ENCODE measurements at regions of chr3 and their contacts with region 1.

Region 1: DNA sequence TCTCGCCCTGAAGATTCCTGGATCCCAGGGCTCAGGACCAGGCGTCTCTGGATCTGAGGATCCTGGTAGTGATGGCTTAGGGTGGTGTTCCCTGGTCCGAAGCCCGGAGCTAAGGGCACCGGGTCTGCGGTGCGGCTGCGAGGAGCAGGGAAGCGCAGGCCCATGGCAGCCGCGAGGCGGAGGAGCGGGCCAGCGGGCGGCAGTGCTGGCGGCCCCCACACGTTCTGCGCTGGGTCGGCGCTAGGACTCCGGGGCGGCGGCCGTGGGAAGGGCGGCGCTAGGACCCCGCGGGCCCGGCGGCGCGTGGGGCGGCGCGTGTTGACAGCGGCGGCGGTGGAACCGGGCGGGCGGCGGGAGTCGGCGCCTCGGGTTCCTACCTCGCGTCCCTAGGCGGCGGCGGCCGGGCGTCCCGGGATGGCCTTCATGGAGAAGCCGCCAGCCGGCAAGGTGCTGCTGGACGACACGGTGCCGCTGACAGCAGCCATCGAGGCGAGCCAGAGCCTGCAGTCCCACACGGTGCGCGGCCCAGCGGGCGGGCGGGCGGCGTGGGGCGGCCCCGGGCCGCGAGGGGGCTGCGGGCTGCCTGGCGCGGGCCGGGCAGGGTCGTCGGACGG is at the start of gene PXK:
- DNase-seq: peak; percentile 70 to 78 (median 74)
- ATAC-seq: peak; percentile 86
- H3K4me3 ChIP-seq: peak within 1 kb of the TSS; percentile 72
- H3K27ac ChIP-seq: peak within 1 kb of the TSS; percentile 64
- H3K4me1 ChIP-seq: peaks cover 16 to 21% of the 10 kb centered on the region in 2 experiments; a peak in 4 of 5 replicates
- H3K27me3 ChIP-seq: no peaks in the 10 kb centered on the region
- CTCF ChIP-seq: peak in 2 of 3 experiments; percentile 2 to 43; a peak in 3 of 6 replicates
- EP300 ChIP-seq: no peak
- POLR2A ChIP-seq: no peak
- RAD21 ChIP-seq: peak; percentile 20 to 41
- polyA plus RNA-seq, gene PXK: 3.3 to 4.8 TPM

Region 2: DNA sequence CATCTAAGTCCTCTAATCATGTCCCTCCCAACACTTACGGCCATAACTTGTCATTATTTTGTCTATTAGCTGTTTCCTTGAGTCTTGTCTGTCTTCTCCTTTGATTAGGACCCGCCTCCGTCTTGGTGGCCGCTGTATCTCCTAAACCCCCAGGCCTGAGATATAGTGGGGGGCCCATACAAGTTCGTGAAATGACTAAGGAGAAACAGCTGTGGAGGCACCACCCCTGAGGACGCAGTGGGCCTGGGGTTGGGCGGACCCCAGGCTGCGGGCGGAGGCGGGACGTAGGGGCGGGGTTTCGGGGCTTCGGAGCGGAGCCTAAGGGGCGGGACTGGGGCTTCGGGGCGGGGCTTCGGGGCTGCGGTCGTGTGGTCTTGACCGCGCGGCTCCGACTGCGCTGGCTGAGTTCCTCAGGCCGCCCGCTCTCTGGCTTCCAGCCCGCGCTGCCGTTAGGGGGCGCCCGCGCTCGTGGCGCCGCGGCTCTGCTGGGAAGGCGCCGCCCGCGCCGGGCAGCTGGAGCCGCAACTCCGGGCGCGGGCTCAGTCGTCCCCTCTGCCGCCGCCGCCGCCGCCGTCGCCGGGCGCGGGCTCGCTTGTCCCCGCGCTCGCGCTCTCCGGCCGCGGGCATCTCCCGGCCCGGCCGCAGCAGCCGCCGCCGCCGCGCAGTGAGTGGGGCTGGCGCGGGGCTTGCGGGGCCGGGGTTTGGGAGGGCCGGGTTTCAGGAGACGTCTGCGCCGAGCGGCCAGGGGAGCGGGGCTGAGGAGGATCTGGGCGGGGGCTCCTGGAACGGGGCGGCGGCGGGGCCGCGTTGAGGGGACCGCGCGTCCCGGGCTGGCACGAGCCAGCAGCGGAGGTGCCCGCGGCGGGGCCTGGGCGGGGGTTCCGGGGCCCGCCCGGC is 159.1 kb after region 1 on chr3 and contains the start of gene KCTD6:
- CTCF ChIA-PET with region 1: no interaction called
- POLR2A ChIA-PET with region 1: no interaction called
- in situ Hi-C with region 1: no loop called
- intact Hi-C with region 1: loop called (anchors 2 kb)
- DNase-seq: peak; percentile 89 to 91 (median 90)
- ATAC-seq: peak; percentile 99
- H3K4me3 ChIP-seq: peak within 1 kb of the TSS; percentile 73
- H3K27ac ChIP-seq: peak within 1 kb of the TSS; percentile 39; the same call in 1 of the 3 replicates
- H3K4me1 ChIP-seq: peaks cover 23 to 26% of the 10 kb centered on the region in 2 experiments; a peak in 4 of 5 replicates
- H3K27me3 ChIP-seq: no peaks in the 10 kb centered on the region
- CTCF ChIP-seq: peak; percentile 37 to 94 (median 83); a peak in 5 of 6 replicates
- EP300 ChIP-seq: no peak
- POLR2A ChIP-seq: 0 out of 2 replicates have a peak, but pooled peaks have one; percentile 39
- RAD21 ChIP-seq: peak; percentile 59 to 67
- polyA plus RNA-seq, gene KCTD6: 4.0 to 4.5 TPM